ENCODE measurements at regions of chr6 and their contacts with region 1.

Region 1: GRCh38 chr6:156821707-156822106 is 44.5 kb downstream of the ARID1B start:
- DNase-seq: peak; percentile 31
- CTCF ChIP-seq: no peak

Region 2: GRCh38 chr6:156809034-156809433 is 12.7 kb before region 1 on chr6:
- CTCF ChIA-PET with region 1: interaction called, 17 read pairs
- POLR2A ChIA-PET with region 1: no interaction called
- DNase-seq: peak; percentile 46
- CTCF ChIP-seq: no peak

Region 3: DNA sequence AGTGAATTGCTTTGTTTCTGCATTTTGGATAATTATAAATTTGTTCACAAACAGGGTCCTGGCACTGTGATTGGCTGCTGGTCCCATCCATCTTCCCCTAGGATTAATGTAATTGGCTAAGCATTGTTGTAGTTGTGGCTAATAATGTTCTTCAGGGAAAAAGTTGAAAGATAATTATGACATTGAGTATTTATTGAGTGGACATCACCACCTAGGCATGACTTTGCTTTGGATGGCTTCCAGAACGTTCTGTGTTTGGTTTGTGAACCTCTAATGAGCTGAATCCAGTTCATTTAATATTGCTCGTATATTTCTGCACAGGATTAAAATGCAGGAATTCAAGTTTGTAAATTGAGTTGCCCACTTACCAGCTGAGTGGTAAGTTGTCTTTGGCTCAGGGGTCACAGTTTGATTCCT is 10.5 kb after region 1 on chr6:
- CTCF ChIA-PET with region 1: interaction called, 10 read pairs
- POLR2A ChIA-PET with region 1: no interaction called
- DNase-seq: no peak
- CTCF ChIP-seq: no peak

Region 4: DNA sequence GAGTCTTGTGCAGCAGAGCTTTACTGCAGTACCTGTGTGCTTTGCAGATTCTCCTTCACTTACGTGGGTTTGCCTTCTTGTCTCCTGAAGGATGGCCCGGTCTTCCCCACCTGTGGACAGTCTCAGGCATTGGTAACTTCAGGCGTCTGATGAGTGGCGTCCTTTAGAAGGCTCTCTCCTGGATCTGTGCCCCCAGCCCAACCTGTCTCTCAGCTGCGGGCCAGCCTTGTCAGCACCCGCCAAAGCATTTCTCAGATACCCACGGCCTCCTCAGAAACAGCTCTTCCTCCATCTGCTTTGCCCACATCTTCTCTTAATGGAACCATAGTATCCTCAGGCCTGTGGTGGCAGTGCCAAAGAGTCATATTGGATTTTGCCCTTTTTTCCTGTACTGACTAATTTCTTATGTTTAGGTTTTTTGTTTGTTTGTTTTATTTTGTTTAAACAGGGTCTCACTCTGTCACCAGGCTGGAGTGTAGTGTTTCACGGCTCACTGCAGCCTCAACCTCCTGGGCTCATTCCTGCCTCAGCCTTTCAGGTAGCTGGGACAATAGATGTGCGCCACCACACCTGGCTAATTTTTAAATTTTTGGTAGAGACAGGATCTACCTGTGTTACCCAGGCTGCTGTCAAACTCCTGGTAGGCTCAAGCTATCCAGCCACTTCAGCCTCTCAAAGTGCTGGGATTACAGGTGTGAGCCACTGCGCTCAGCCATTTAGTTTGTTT is 52.1 kb after region 1 on chr6:
- CTCF ChIA-PET with region 1: no interaction called
- POLR2A ChIA-PET with region 1: no interaction called
- DNase-seq: no peak
- CTCF ChIP-seq: no peak